Testis (tissue), 5 donors: ENCODE measurements at regions of chr6 and their contacts with region 1.

Region 1: DNA sequence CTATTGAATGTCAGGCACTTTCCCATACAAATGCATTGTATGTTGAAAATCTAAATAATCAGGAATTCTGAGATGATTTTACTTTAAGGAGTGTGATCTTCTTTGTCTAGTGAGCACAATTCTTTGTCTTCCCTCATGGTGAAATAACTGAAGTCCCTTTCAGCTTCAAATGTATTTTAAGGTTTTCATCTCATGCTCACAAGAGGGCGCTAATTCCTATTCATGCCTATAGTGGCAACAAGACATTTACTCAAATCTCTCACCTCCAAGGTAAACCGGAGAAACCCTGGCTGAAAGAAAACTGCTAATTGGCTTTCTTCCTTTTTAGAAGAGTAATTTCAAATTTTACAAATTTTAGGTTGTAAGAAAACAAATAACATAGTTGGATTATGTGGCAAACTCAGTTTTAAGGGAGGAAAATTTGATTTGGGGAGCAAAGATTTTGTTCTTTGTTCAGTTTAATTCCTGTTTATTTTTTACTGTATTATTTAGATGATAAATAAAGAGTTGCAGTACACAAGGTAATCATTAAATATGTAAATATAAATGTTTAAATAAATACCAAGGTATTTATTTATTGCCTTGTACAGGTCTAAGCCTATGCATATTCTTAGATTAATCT is 69.1 kb downstream of the SLC35F1 start:
- DNase-seq: no peak
- H3K4me3 ChIP-seq: no peak overlapping the region
- H3K27ac ChIP-seq: no peak overlapping the region
- H3K4me1 ChIP-seq: no peaks in the 10 kb centered on the region
- H3K27me3 ChIP-seq: no peaks in the 10 kb centered on the region
- CTCF ChIP-seq: peak in 2 of 3 experiments; percentile 47
- POLR2A ChIP-seq: no peak

Region 2: GRCh38 chr6:118054082-118054481 is 77.9 kb after region 1 on chr6:
- intact Hi-C with region 1: no loop called
- DNase-seq: no peak
- H3K4me3 ChIP-seq: no peak overlapping the region
- H3K27ac ChIP-seq: no peak overlapping the region
- H3K4me1 ChIP-seq: no peaks in the 10 kb centered on the region
- H3K27me3 ChIP-seq: no peaks in the 10 kb centered on the region
- CTCF ChIP-seq: no peak
- POLR2A ChIP-seq: no peak

Region 3: GRCh38 chr6:118621799-118622470 is 645.8 kb after region 1 on chr6:
- intact Hi-C with region 1: loop called (anchors 5 kb)
- DNase-seq: no peak
- H3K4me3 ChIP-seq: no peak overlapping the region
- H3K27ac ChIP-seq: no peak overlapping the region
- H3K4me1 ChIP-seq: peaks cover 9% of the 10 kb centered on the region
- H3K27me3 ChIP-seq: no peaks in the 10 kb centered on the region
- CTCF ChIP-seq: no peak
- POLR2A ChIP-seq: no peak